ENCODE measurements at regions of chr3 and their contacts with region 1.

Region 1: DNA sequence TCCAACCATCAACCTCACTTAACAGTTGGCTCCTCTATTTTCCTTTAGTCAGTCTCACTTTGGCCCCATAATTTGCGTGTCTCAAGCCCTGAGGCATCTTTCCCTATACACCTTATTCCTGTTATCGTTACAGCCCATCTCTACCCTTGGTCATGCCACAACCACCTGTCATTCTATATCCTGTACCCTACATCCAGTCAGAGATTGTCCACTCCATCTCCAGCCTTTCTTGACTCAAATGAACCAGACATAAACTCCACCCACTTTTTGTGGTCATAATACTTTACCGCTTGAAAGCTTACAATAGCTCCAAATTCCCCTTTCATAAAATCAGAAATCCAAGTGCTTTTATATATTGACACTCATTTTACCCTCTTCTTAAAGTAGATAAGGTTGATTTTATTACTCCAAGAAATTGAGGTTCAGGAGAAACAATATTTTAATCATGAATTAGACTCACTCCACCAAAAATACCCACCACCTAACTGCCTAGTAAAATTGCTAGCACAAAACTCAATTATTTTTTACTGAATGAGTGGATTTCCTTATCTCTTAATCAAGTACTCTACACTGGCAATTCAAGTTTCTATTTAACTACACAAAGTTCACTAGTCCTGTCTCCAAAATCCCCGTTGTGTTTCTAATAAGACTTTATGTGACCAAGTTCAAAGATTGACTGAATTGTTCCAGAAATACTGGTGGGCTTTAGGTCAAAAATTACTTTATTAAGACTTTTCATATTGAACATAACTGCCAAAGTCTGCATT is 9.1 kb downstream of the CCR4 start:
- DNase-seq: no peak
- H3K4me3 ChIP-seq: no peak overlapping the region
- H3K27ac ChIP-seq: no peak overlapping the region
- H3K4me1 ChIP-seq: peaks cover 13% of the 10 kb centered on the region
- H3K27me3 ChIP-seq: no peaks in the 10 kb centered on the region
- CTCF ChIP-seq: no peak

Region 2: GRCh38 chr3:32821686-32822296 is 138.8 kb before region 1 on chr3:
- CTCF ChIA-PET with region 1: no interaction called
- dilution Hi-C with region 1: no loop called
- in situ Hi-C with region 1: no loop called
- intact Hi-C with region 1: no loop called
- DNase-seq: no peak
- H3K4me3 ChIP-seq: no peak overlapping the region
- H3K27ac ChIP-seq: no peak overlapping the region
- H3K4me1 ChIP-seq: peaks cover 4% of the 10 kb centered on the region
- H3K27me3 ChIP-seq: peaks cover 58% of the 10 kb centered on the region
- CTCF ChIP-seq: no peak

Region 3: DNA sequence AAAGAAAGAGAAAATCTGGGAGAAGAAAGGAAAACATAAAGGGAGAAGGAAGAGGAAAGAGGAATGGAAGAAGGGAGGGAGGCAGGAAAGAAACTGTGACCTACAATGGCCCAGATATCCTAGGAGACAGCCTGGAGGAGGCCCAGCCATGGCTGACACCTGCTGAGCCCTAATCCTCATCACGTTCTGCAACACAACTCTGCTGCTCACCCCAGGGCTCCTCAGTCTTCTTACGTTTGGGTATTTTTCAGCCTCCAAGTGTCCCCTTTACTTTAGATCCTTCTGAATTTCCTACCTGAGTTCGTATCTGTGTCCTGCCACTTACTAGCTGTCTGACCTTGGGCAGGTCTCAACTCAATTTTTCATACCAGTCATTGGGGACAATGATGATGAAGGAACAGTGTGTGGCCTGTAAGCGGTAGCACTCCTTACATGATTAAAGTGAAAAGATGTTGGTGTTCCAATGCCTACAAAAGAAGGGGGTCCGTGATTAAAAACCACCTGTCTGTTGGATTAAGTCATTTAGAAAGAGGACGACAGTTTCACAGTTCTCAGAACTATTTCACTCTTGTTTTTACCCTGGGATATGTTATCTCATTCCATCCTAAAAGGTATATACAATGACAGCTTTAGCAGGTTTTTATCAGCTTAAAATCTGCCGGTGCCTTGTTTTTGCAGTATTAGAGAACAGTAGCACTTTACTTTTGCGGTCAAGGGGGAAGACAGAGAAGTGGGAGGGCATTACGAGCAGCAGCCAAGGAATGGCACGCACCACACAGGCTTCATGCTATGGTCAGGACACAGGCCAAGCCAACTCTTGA is 38.3 kb after region 1 on chr3:
- CTCF ChIA-PET with region 1: no interaction called
- dilution Hi-C with region 1: loop called (anchors 5 kb)
- in situ Hi-C with region 1: no loop called
- intact Hi-C with region 1: no loop called
- DNase-seq: no peak
- H3K4me3 ChIP-seq: no peak overlapping the region
- H3K27ac ChIP-seq: no peak overlapping the region
- H3K4me1 ChIP-seq: peaks cover 6% of the 10 kb centered on the region
- H3K27me3 ChIP-seq: no peaks in the 10 kb centered on the region
- CTCF ChIP-seq: no peak

Region 4: DNA sequence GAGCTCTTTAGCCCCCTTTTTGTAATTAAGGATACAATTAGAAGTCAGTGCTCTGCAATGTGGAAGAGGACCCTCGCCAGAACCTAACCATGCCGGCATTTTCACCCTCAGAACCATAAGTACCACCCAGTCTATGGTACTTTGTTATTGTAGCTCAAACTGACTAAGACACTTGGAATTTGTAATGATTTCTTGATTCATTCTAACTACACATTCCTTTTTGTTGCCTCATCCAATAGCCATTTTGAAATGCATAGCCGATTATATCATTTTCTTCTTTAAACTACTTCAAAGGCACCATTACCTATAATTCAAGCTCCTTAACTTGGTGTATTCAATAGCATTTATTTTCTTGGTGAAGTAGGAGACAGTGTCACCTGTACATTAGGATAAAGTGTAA is 75.0 kb after region 1 on chr3:
- CTCF ChIA-PET with region 1: interaction called, 3 read pairs
- dilution Hi-C with region 1: loop called (anchors 5 kb)
- in situ Hi-C with region 1: no loop called
- intact Hi-C with region 1: no loop called
- DNase-seq: peak; percentile 38
- H3K4me3 ChIP-seq: no peak overlapping the region
- H3K27ac ChIP-seq: peak overlapping the region; percentile 20
- H3K4me1 ChIP-seq: peaks cover 35% of the 10 kb centered on the region
- H3K27me3 ChIP-seq: no peaks in the 10 kb centered on the region
- CTCF ChIP-seq: no peak